ENCODE measurements at regions of chr6 and their contacts with region 1.

Region 1: DNA sequence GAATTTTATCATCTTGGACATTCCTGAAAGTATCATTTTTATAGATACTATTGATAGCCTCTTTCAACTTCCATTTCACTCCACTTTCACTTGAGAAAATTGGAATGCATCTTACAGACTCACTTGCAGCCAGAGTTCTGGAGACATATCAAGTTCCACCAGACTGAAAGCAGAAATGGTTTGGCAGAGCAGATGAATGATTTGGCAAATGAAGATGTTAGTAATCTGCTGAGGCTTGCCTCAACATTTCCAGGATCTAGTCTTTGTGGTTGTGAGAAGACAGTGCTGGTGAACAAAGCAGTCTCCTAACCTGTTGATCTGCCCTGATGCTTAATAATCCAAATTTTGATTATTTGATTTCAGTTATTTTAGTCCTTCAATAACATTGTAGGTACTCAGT is 202.6 kb downstream of the TRDN start:
- DNase-seq: no peak
- ATAC-seq: no peak
- H3K4me3 ChIP-seq: no peak overlapping the region
- H3K4me3 Mint-ChIP-seq: no peak overlapping the region
- H3K27ac ChIP-seq: no peak overlapping the region
- H3K27ac Mint-ChIP-seq: no peak overlapping the region
- H3K4me1 ChIP-seq: no peaks in the 10 kb centered on the region
- H3K4me1 Mint-ChIP-seq: no peaks in the 10 kb centered on the region
- H3K27me3 ChIP-seq: no peaks in the 10 kb centered on the region
- H3K27me3 Mint-ChIP-seq: no peaks in the 10 kb centered on the region

Region 2: GRCh38 chr6:123489589-123489988 is 55.4 kb after region 1 on chr6:
- CTCF ChIA-PET with region 1: no interaction called
- POLR2A ChIA-PET with region 1: interaction called in 1 of 2 experiments, 10 read pairs
- DNase-seq: no peak
- ATAC-seq: no peak
- H3K4me3 ChIP-seq: no peak overlapping the region
- H3K4me3 Mint-ChIP-seq: no peak overlapping the region
- H3K27ac ChIP-seq: no peak overlapping the region
- H3K27ac Mint-ChIP-seq: no peak overlapping the region
- H3K4me1 ChIP-seq: no peaks in the 10 kb centered on the region
- H3K4me1 Mint-ChIP-seq: no peaks in the 10 kb centered on the region
- H3K27me3 ChIP-seq: no peaks in the 10 kb centered on the region
- H3K27me3 Mint-ChIP-seq: no peaks in the 10 kb centered on the region

Region 3: DNA sequence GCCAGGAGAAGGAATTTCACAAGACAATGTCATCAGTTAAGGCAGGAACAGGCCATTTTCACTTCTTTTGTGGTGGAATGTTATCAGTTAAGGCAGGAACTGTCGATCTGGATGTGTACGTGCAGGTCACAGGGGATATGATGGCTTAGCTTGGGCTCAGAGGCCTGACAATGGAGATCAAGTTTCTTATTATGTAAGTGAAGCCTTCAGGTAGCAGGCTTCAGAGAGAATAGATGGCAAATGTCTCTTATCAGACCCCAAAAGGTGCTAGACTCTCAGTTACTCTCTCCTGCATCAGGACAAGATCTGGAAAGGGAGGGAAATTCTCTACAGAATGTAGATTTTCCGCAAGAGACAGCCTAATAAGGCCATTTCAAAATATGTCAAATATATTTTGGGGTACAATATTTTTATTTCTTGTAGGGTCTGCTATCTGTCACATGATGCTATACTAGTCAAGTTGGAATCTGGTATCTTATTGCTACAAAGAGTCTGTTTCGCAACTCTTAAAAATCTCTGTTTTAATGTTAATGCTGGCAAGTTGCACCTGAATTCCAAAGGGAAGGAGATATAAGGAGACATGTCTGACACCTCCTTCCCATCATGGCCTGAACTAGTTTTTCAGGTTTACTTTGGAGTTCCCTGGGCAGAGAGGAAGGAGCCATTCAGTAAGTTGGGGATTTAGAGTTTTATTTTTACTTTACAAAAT is 153.8 kb after region 1 on chr6:
- CTCF ChIA-PET with region 1: no interaction called
- POLR2A ChIA-PET with region 1: no interaction called
- DNase-seq: no peak
- ATAC-seq: no peak
- H3K4me3 ChIP-seq: no peak overlapping the region
- H3K4me3 Mint-ChIP-seq: no peak overlapping the region
- H3K27ac ChIP-seq: no peak overlapping the region
- H3K27ac Mint-ChIP-seq: no peak overlapping the region
- H3K4me1 ChIP-seq: no peaks in the 10 kb centered on the region
- H3K4me1 Mint-ChIP-seq: no peaks in the 10 kb centered on the region
- H3K27me3 ChIP-seq: no peaks in the 10 kb centered on the region
- H3K27me3 Mint-ChIP-seq: peaks cover 0 to under 1% of the 10 kb centered on the region in 2 donors